MCF 10A (cell line): ENCODE measurements at regions of chr3 and their contacts with region 1.

Region 1: GRCh38 chr3:142586803-142587406 is 8.4 kb upstream of the ATR start:
- DNase-seq: peak; percentile 89
- H3K4me3 Mint-ChIP-seq: no peak overlapping the region
- H3K27ac Mint-ChIP-seq: no peak overlapping the region
- H3K4me1 Mint-ChIP-seq: peaks cover 6% of the 10 kb centered on the region
- H3K27me3 Mint-ChIP-seq: peaks cover 21% of the 10 kb centered on the region
- CTCF ChIP-seq: peak; percentile 55

Region 2: DNA sequence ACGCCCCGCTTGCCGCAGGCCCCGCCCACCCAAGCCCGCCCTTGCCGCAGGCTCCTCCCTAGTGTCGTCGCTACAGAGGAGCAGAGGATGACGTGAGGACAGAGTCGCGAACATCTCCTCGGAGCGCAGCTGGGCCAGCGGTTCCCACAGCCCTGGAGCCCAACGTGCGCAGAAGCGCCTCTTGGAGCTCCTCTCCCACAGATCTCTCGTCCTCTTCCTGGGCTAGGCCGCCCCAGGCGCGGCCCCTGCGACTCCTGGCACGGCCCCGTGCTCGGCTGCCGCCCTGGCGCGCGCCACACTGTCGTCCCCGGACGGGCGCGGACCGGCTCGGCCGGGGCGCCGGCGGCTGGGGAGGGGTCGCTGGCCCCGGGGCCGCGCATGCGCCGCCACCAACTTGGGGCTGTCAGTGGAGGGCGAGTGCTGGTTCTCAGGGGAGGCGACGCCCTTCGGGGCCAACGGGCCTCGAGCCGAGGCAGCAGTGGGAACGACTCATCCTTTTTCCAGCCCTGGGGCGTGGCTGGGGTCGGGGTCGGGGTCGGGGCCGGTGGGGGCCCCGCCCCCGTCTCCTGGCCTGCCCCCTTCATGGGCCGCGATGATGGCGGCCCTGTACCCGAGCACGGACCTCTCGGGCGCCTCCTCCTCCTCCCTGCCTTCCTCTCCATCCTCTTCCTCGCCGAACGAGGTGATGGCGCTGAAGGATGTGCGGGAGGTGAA is 137.2 kb after region 1 on chr3 and contains the start of gene TRPC1:
- CTCF ChIA-PET with region 1: interaction called, 6 read pairs
- POLR2A ChIA-PET with region 1: interaction called, 4 read pairs
- intact Hi-C with region 1: loop called (anchors 2 kb)
- DNase-seq: peak; percentile 83
- H3K4me3 Mint-ChIP-seq: peak within 1 kb of the TSS; percentile 91
- H3K27ac Mint-ChIP-seq: peak within 1 kb of the TSS; percentile 86
- H3K4me1 Mint-ChIP-seq: peaks cover 7% of the 10 kb centered on the region
- H3K27me3 Mint-ChIP-seq: no peaks in the 10 kb centered on the region
- CTCF ChIP-seq: no peak
- total RNA-seq, gene TRPC1: 9.2 and 15.2 TPM in 2 replicates

Region 3: GRCh38 chr3:142929109-142929508 is 342.2 kb after region 1 on chr3:
- CTCF ChIA-PET with region 1: interaction called, 3 read pairs
- POLR2A ChIA-PET with region 1: no interaction called
- intact Hi-C with region 1: loop called (anchors 1 kb)
- DNase-seq: peak; percentile 70
- H3K4me3 Mint-ChIP-seq: no peak overlapping the region
- H3K27ac Mint-ChIP-seq: no peak overlapping the region
- H3K4me1 Mint-ChIP-seq: peaks cover 15% of the 10 kb centered on the region
- H3K27me3 Mint-ChIP-seq: no peaks in the 10 kb centered on the region
- CTCF ChIP-seq: peak; percentile 53

Region 4: DNA sequence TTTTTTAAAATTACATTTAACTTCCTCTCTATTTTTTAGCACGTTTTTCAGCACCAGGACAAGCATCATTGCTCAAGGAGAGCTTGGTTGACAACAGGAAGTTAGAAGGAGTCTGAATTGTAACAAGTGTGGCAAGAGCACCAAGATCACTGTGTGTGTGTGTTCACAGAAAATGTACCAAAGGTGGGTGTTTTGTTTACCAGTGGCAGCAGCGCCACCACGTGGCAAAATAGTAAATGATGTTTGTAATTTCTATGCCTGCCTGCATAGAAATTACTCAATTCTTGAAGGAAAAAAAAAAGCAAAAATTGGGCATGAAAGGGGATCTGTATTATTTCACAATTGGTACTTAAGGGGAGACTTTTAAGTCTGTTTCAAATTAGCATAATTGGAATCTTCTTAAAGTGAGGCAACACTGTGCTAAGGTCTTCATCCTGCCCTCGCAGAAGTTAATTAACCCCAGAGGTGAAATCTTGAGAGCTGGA is 407.1 kb after region 1 on chr3:
- CTCF ChIA-PET with region 1: interaction called, 19 read pairs
- POLR2A ChIA-PET with region 1: no interaction called
- intact Hi-C with region 1: loop called (anchors 1 kb)
- DNase-seq: peak; percentile 85
- H3K4me3 Mint-ChIP-seq: no peak overlapping the region
- H3K27ac Mint-ChIP-seq: no peak overlapping the region
- H3K4me1 Mint-ChIP-seq: no peaks in the 10 kb centered on the region
- H3K27me3 Mint-ChIP-seq: no peaks in the 10 kb centered on the region
- CTCF ChIP-seq: peak; percentile 65

Region 5: GRCh38 chr3:143763564-143764162 is 1176.8 kb after region 1 on chr3:
- CTCF ChIA-PET with region 1: interaction called, 4 read pairs
- POLR2A ChIA-PET with region 1: no interaction called
- intact Hi-C with region 1: loop called (anchors 5 kb)
- DNase-seq: peak; percentile 44
- H3K4me3 Mint-ChIP-seq: no peak overlapping the region
- H3K27ac Mint-ChIP-seq: no peak overlapping the region
- H3K4me1 Mint-ChIP-seq: no peaks in the 10 kb centered on the region
- H3K27me3 Mint-ChIP-seq: no peaks in the 10 kb centered on the region
- CTCF ChIP-seq: peak; percentile 54